CD4-positive, alpha-beta T cell (primary cell): ENCODE measurements at regions of chr4 and their contacts with region 1.

Region 1: GRCh38 chr4:6640292-6641163 is at the start of gene MRFAP1:
- DNase-seq: peak; percentile 90 to 99 (median 94)
- ATAC-seq: peak; percentile 78
- H3K4me3 ChIP-seq: peak within 1 kb of the TSS; percentile 77
- H3K4me3 Mint-ChIP-seq: peak within 1 kb of the TSS; percentile 100
- H3K27ac ChIP-seq: peak within 1 kb of the TSS; percentile 93 to 98
- H3K27ac Mint-ChIP-seq: peak within 1 kb of the TSS; percentile 99
- H3K4me1 ChIP-seq: peaks cover 38% of the 10 kb centered on the region
- H3K4me1 Mint-ChIP-seq: peaks cover 45% of the 10 kb centered on the region
- H3K27me3 ChIP-seq: no peaks in the 10 kb centered on the region
- H3K27me3 Mint-ChIP-seq: no peaks in the 10 kb centered on the region
- CTCF ChIP-seq: no peak
- total RNA-seq, gene MRFAP1: 172 to 181 TPM

Region 2: DNA sequence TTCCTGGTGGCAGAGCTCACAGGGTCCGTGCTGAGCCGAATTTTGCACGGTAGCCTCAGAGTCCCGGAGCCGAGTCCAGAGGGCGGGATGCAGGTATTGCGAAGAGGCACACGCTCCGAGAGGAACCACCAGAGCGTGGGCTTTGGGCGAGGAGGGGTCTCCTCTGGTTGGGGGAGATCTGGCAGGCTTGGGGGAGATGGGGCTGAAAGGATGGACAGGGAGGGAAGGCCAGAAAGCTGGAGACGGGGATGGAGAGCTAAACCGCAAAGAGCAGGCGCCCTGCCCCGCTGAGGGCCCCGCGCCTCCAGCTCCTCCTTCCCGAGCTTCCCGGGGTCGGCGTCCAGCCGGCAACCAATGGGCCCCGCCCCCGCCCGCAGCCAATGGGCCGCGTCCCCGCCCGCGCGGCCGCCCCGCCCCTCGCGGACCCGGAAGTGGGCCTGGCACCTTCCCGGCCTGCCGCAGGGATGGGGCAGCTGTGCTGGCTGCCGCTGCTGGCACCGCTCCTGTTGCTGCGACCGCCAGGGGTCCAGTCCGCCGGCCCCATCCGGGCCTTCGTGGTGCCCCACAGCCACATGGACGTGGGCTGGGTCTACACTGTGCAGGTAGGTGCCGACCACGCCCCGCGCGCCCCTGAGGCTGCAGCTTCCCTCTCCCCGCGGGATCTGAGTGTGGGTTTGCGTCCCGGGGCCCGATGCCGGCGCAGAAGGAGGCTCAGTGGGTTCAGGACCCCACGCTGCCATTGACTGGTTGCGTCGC is 65.6 kb before region 1 on chr4 and contains the start of gene MAN2B2:
- CTCF ChIA-PET with region 1: no interaction called
- POLR2A ChIA-PET with region 1: interaction called, 28 read pairs
- intact Hi-C with region 1: loop called (anchors 5 to 10 kb)
- DNase-seq: peak; percentile 51 to 89 (median 80)
- ATAC-seq: peak; percentile 93
- H3K4me3 ChIP-seq: peak within 1 kb of the TSS; percentile 98
- H3K4me3 Mint-ChIP-seq: peak within 1 kb of the TSS; percentile 93
- H3K27ac ChIP-seq: peak within 1 kb of the TSS; percentile 55 to 74
- H3K27ac Mint-ChIP-seq: peak within 1 kb of the TSS; percentile 79
- H3K4me1 ChIP-seq: peaks cover 30% of the 10 kb centered on the region
- H3K4me1 Mint-ChIP-seq: peaks cover 4% of the 10 kb centered on the region
- H3K27me3 ChIP-seq: no peaks in the 10 kb centered on the region
- H3K27me3 Mint-ChIP-seq: no peaks in the 10 kb centered on the region
- CTCF ChIP-seq: no peak
- total RNA-seq, gene MAN2B2: 25.9 to 28.5 TPM

Region 3: GRCh38 chr4:6673660-6674499 is 33.4 kb after region 1 on chr4:
- CTCF ChIA-PET with region 1: interaction called, 21 read pairs
- POLR2A ChIA-PET with region 1: interaction called, 169 read pairs
- intact Hi-C with region 1: loop called (anchors 1 to 2 kb)
- DNase-seq: peak; percentile 87 to 99 (median 94)
- ATAC-seq: peak; percentile 82
- H3K4me3 ChIP-seq: peak overlapping the region; percentile 64
- H3K4me3 Mint-ChIP-seq: peak overlapping the region; percentile 97
- H3K27ac ChIP-seq: peak overlapping the region; percentile 72 to 76
- H3K27ac Mint-ChIP-seq: peak overlapping the region; percentile 96
- H3K4me1 ChIP-seq: peaks cover 53% of the 10 kb centered on the region
- H3K4me1 Mint-ChIP-seq: peaks cover 50% of the 10 kb centered on the region
- H3K27me3 ChIP-seq: no peaks in the 10 kb centered on the region
- H3K27me3 Mint-ChIP-seq: no peaks in the 10 kb centered on the region
- CTCF ChIP-seq: no peak

Region 4: GRCh38 chr4:6701371-6701770 is 60.8 kb after region 1 on chr4:
- CTCF ChIA-PET with region 1: no interaction called
- POLR2A ChIA-PET with region 1: interaction called, 34 read pairs
- intact Hi-C with region 1: no loop called
- DNase-seq: peak in 10 of 14 experiments; percentile 25 to 73 (median 46)
- ATAC-seq: peak; percentile 30
- H3K4me3 ChIP-seq: no peak overlapping the region
- H3K4me3 Mint-ChIP-seq: no peak overlapping the region
- H3K27ac ChIP-seq: no peak overlapping the region
- H3K27ac Mint-ChIP-seq: no peak overlapping the region
- H3K4me1 ChIP-seq: peaks cover 60% of the 10 kb centered on the region
- H3K4me1 Mint-ChIP-seq: peaks cover 69% of the 10 kb centered on the region
- H3K27me3 ChIP-seq: no peaks in the 10 kb centered on the region
- H3K27me3 Mint-ChIP-seq: no peaks in the 10 kb centered on the region
- CTCF ChIP-seq: peak; percentile 22

Region 5: GRCh38 chr4:6783053-6783981 is 142.8 kb after region 1 on chr4:
- CTCF ChIA-PET with region 1: no interaction called
- POLR2A ChIA-PET with region 1: interaction called, 11 read pairs
- intact Hi-C with region 1: loop called (anchors 1 to 5 kb)
- DNase-seq: peak; percentile 78 to 94 (median 86)
- ATAC-seq: peak; percentile 78
- H3K4me3 ChIP-seq: peak overlapping the region; percentile 77
- H3K4me3 Mint-ChIP-seq: peak overlapping the region; percentile 92
- H3K27ac ChIP-seq: peak overlapping the region; percentile 92 to 96
- H3K27ac Mint-ChIP-seq: peak overlapping the region; percentile 86
- H3K4me1 ChIP-seq: peaks cover 43% of the 10 kb centered on the region
- H3K4me1 Mint-ChIP-seq: peaks cover 59% of the 10 kb centered on the region
- H3K27me3 ChIP-seq: no peaks in the 10 kb centered on the region
- H3K27me3 Mint-ChIP-seq: no peaks in the 10 kb centered on the region
- CTCF ChIP-seq: no peak

Region 6: DNA sequence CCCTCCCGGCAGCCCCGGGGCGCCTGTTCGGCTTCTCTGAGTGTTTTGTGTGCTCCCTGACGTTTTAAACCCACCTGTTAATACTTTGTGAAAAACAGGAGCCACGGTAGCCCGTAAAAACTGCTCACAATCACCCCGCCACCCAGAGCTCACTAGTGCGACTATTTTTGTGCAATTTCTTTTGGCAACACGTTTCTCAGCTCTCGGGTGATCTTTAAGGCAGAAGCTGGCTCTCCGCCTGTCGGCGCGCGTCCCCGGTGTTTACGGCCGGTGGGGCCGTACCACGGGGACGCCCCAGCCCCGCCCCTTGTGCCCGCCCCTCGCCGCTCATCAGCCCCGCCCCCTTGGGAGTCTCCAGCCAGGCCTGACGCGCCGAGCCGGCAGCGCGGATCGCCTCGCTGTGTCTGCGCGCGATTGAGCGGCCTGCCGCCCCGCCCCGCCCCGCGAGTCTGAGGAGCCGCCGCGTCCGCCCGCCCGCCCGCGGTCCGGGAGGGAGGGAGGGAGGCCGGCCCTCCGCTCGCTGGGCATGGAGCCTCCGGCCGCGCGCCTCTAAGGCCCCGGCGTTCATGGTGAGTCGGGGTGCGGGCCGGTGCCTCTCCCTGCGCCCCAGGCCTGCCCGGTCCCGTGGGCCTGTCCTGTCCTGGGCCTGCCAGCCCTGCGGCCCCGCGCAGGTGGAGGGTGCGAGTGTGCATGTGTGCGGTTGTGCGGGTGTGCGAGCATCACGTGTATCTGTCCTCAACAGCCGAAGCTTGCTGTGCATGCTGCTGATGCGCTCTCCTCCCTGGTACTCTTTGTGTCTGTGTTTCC is 346.5 kb after region 1 on chr4:
- CTCF ChIA-PET with region 1: no interaction called
- POLR2A ChIA-PET with region 1: interaction called, 11 read pairs
- intact Hi-C with region 1: loop called (anchors 2 kb)
- DNase-seq: peak; percentile 88 to 98 (median 92)
- ATAC-seq: peak; percentile 90
- H3K4me3 ChIP-seq: peak overlapping the region; percentile 88
- H3K4me3 Mint-ChIP-seq: peak overlapping the region; percentile 97
- H3K27ac ChIP-seq: peak overlapping the region; percentile 78 to 93
- H3K27ac Mint-ChIP-seq: peak overlapping the region; percentile 95
- H3K4me1 ChIP-seq: peaks cover 64% of the 10 kb centered on the region
- H3K4me1 Mint-ChIP-seq: peaks cover 67% of the 10 kb centered on the region
- H3K27me3 ChIP-seq: no peaks in the 10 kb centered on the region
- H3K27me3 Mint-ChIP-seq: no peaks in the 10 kb centered on the region
- CTCF ChIP-seq: no peak